ENCODE measurements at regions of chr15 and their contacts with region 1.

Region 1: GRCh38 chr15:71125831-71126453 is 10.7 kb downstream of the THSD4 start:
- DNase-seq: no peak
- ATAC-seq: peak in 7 of 8 donors; percentile 18 to 58 (median 50)
- H3K4me3 ChIP-seq: no peak overlapping the region
- H3K27ac ChIP-seq: peak overlapping the region in 9 of 10 donors; percentile 12 to 88 (median 78)
- H3K4me1 ChIP-seq: peaks cover 0 to 71% (median 37%) of the 10 kb centered on the region in 9 donors
- H3K27me3 ChIP-seq: no peaks in the 10 kb centered on the region
- CTCF ChIP-seq: peak in 6 of 9 donors; percentile 14 to 35 (median 25)

Region 2: DNA sequence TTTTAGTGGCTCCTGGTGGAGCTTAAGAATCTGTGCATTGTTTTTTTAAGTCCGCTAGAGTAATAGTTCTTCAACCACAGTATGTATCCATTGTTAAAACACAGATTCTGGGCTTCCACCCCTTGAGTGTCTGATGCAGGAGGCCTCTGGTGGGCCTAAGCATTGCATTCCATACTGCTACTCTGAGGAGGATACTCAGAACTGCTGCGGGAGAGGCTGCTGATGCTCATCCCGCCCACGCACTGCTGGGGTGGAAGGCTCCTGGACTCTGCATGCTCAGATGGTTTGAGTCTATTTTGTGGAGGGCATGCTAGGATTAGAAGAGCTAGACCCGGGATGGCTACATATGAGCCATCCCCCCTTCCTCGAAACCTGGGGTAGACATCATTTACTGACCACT is 63.8 kb after region 1 on chr15:
- intact Hi-C with region 1: loop called in 1 of 10 experiments (anchors 10 kb)
- DNase-seq: no peak
- ATAC-seq: no peak
- H3K4me3 ChIP-seq: no peak overlapping the region
- H3K27ac ChIP-seq: no peak overlapping the region
- H3K4me1 ChIP-seq: peaks cover 0 to 37% (median 13%) of the 10 kb centered on the region in 9 donors
- H3K27me3 ChIP-seq: no peaks in the 10 kb centered on the region
- CTCF ChIP-seq: no peak

Region 3: GRCh38 chr15:71237456-71238188 is 111.7 kb after region 1 on chr15:
- intact Hi-C with region 1: loop called in 1 of 10 experiments (anchors 10 kb)
- DNase-seq: peak; percentile 66 to 78
- ATAC-seq: peak; percentile 76 to 97 (median 92)
- H3K4me3 ChIP-seq: no peak overlapping the region
- H3K27ac ChIP-seq: peak overlapping the region in 9 of 10 donors; percentile 0 to 68 (median 54)
- H3K4me1 ChIP-seq: peaks cover 0 to 49% (median 19%) of the 10 kb centered on the region in 9 donors
- H3K27me3 ChIP-seq: no peaks in the 10 kb centered on the region
- CTCF ChIP-seq: no peak